Motor neuron (in vitro differentiated cells): ENCODE measurements at regions of chr14 and their contacts with region 1.

Region 1: GRCh38 chr14:96297000-96297399 is 41.0 kb downstream of the BDKRB1 start:
- ATAC-seq: peak in 3 of 8 experiments; percentile 25 to 51 (median 28)
- H3K4me3 ChIP-seq: no peak overlapping the region
- H3K27ac ChIP-seq: no peak overlapping the region
- H3K4me1 ChIP-seq: no peaks in the 10 kb centered on the region

Region 2: GRCh38 chr14:96409701-96410100 is 112.7 kb after region 1 on chr14:
- in situ Hi-C with region 1: loop called in 3 of 9 experiments (anchors 10 to 25 kb)
- ATAC-seq: no peak
- H3K4me3 ChIP-seq: no peak overlapping the region
- H3K27ac ChIP-seq: no peak overlapping the region
- H3K4me1 ChIP-seq: no peaks in the 10 kb centered on the region

Region 3: GRCh38 chr14:96424109-96424989 is 127.3 kb after region 1 on chr14:
- in situ Hi-C with region 1: loop called in 3 of 9 experiments (anchors 10 to 25 kb)
- ATAC-seq: peak; percentile 68 to 92 (median 78)
- H3K4me3 ChIP-seq: no peak overlapping the region
- H3K27ac ChIP-seq: no peak overlapping the region
- H3K4me1 ChIP-seq: peaks cover 10 to 11% of the 10 kb centered on the region in 2 donors